Activated T-helper 2 cell treated with anti-CD3 and anti-CD28 coated beads, Interferon-gamma antibody, Interleukin-2, Interleukin-4, amounts not matched to agents 10 μg/mL and 5 μg/mL and 100 μg/mL, durations not matched to agents 14 hours and 24 hours and 36 hours (primary cell): ENCODE measurements at regions of chr22 and their contacts with region 1.

Region 1: GRCh38 chr22:36977947-36978660 is 41.1 kb downstream of the TST start:
- DNase-seq: peak; percentile 84
- H3K4me3 Mint-ChIP-seq: peak overlapping the region; percentile 83
- H3K27ac Mint-ChIP-seq: peak overlapping the region; percentile 84
- H3K4me1 Mint-ChIP-seq: peaks cover 8% of the 10 kb centered on the region
- H3K27me3 Mint-ChIP-seq: no peaks in the 10 kb centered on the region

Region 2: GRCh38 chr22:36546092-36546804 is 431.9 kb before region 1 on chr22:
- intact Hi-C with region 1: loop called (anchors 1 kb)
- DNase-seq: no peak
- H3K4me3 Mint-ChIP-seq: no peak overlapping the region
- H3K27ac Mint-ChIP-seq: no peak overlapping the region
- H3K4me1 Mint-ChIP-seq: peaks cover 23% of the 10 kb centered on the region
- H3K27me3 Mint-ChIP-seq: peaks cover 4% of the 10 kb centered on the region

Region 3: GRCh38 chr22:36781656-36782627 is 196.2 kb before region 1 on chr22:
- intact Hi-C with region 1: loop called (anchors 1 kb)
- DNase-seq: peak; percentile 83
- H3K4me3 Mint-ChIP-seq: peak overlapping the region; percentile 7
- H3K27ac Mint-ChIP-seq: peak overlapping the region; percentile 93
- H3K4me1 Mint-ChIP-seq: peaks cover 27% of the 10 kb centered on the region
- H3K27me3 Mint-ChIP-seq: peaks cover 7% of the 10 kb centered on the region